Caco-2 (cell line): ENCODE measurements at regions of chr14 and their contacts with region 1.

Region 1: GRCh38 chr14:61537563-61538463 is 157.5 kb upstream of the HIF1A start:
- DNase-seq: peak; percentile 90 to 93
- H3K4me3 ChIP-seq: no peak overlapping the region
- H3K4me3 Mint-ChIP-seq: peak overlapping the region; percentile 63
- H3K27ac Mint-ChIP-seq: peak overlapping the region; percentile 99
- H3K4me1 ChIP-seq: peaks cover 45% of the 10 kb centered on the region
- H3K4me1 Mint-ChIP-seq: peaks cover 42% of the 10 kb centered on the region
- H3K27me3 ChIP-seq: no peaks in the 10 kb centered on the region
- H3K27me3 Mint-ChIP-seq: no peaks in the 10 kb centered on the region
- CTCF ChIP-seq: no peak

Region 2: GRCh38 chr14:61475316-61475715 is 62.5 kb before region 1 on chr14:
- CTCF ChIA-PET with region 1: no interaction called
- POLR2A ChIA-PET with region 1: no interaction called
- intact Hi-C with region 1: loop called (anchors 2 kb)
- DNase-seq: peak in 1 of 2 experiments; percentile 60
- H3K4me3 ChIP-seq: no peak overlapping the region
- H3K4me3 Mint-ChIP-seq: no peak overlapping the region
- H3K27ac Mint-ChIP-seq: no peak overlapping the region
- H3K4me1 ChIP-seq: no peaks in the 10 kb centered on the region
- H3K4me1 Mint-ChIP-seq: peaks cover 6% of the 10 kb centered on the region
- H3K27me3 ChIP-seq: no peaks in the 10 kb centered on the region
- H3K27me3 Mint-ChIP-seq: no peaks in the 10 kb centered on the region
- CTCF ChIP-seq: peak; percentile 61 to 77

Region 3: DNA sequence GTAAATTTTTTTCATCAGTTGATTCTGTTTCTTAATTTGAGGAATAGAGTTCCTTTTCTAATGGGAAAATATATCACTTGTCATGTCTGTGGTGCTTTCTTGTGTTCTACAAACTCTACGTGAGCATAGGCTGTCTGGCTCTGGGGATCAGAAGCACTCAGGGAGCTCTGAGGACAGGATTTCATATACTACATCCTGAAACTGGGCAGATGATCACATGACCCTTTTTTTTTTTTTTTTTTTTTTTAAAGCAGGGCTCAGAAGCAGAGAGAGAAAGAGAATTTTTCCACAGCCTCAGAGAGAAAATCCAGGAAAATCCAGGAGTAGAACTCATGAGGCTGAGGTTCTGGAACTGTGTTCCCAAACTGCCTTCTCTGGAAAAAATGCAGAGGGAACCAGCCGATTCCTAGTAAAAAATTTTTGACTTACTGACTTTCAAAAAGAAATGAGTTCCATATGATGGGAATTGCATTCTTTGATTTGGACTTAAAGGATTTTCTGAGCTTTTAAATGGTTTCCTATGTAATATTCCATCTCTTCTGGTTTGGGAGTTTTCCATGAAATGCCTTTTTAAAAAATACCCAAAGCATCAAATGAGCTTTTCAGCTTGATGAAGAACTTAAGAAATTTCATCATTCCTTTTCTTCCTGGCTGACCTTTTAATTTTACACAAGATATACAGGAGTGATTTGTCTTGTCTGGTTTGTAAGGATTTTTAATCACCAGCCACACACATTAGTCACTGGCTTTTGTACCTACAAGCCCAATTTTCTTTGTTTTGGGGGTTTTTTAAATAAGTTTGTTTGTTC is 25.6 kb before region 1 on chr14:
- CTCF ChIA-PET with region 1: no interaction called
- POLR2A ChIA-PET with region 1: no interaction called
- intact Hi-C with region 1: loop called (anchors 1 kb)
- DNase-seq: no peak
- H3K4me3 ChIP-seq: no peak overlapping the region
- H3K4me3 Mint-ChIP-seq: no peak overlapping the region
- H3K27ac Mint-ChIP-seq: no peak overlapping the region
- H3K4me1 ChIP-seq: peaks cover 15% of the 10 kb centered on the region
- H3K4me1 Mint-ChIP-seq: peaks cover 23% of the 10 kb centered on the region
- H3K27me3 ChIP-seq: no peaks in the 10 kb centered on the region
- H3K27me3 Mint-ChIP-seq: no peaks in the 10 kb centered on the region
- CTCF ChIP-seq: no peak

Region 4: DNA sequence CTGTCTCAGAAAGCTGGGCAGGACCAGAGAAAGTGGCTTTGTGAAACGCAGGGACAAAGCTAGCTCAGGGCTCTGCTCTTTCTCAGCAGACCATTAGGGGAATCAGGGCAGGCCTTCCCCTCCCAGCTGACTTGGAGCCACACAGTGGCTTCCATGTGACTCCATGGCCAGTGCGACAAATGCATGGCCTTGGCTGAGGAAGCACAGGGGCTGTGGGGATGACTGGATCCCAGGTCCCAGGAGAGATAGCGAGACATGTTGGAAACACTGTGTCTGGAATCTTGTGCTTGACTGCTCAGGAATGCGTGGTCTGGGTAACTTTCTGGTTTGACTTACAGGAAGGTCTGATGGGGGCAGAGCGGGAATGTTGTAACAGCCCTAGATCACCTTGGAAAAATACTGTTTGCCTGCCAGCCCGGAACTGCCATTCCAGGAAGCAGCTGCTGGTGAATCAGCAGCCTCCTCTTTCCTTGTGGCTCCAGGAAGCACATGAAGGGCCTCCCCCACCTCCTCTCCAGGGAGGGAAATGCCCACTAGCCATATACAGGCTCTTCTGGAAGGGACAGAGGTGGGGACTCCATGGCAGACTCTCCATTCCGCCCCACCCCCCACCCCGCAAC is 24.0 kb after region 1 on chr14:
- CTCF ChIA-PET with region 1: interaction called, 18 read pairs
- POLR2A ChIA-PET with region 1: interaction called, 30 read pairs
- intact Hi-C with region 1: loop called (anchors 1 kb)
- DNase-seq: peak; percentile 62 to 76
- H3K4me3 ChIP-seq: no peak overlapping the region
- H3K4me3 Mint-ChIP-seq: peak overlapping the region; percentile 28
- H3K27ac Mint-ChIP-seq: peak overlapping the region; percentile 94
- H3K4me1 ChIP-seq: peaks cover 56% of the 10 kb centered on the region
- H3K4me1 Mint-ChIP-seq: peaks cover 33% of the 10 kb centered on the region
- H3K27me3 ChIP-seq: no peaks in the 10 kb centered on the region
- H3K27me3 Mint-ChIP-seq: no peaks in the 10 kb centered on the region
- CTCF ChIP-seq: no peak

Region 5: DNA sequence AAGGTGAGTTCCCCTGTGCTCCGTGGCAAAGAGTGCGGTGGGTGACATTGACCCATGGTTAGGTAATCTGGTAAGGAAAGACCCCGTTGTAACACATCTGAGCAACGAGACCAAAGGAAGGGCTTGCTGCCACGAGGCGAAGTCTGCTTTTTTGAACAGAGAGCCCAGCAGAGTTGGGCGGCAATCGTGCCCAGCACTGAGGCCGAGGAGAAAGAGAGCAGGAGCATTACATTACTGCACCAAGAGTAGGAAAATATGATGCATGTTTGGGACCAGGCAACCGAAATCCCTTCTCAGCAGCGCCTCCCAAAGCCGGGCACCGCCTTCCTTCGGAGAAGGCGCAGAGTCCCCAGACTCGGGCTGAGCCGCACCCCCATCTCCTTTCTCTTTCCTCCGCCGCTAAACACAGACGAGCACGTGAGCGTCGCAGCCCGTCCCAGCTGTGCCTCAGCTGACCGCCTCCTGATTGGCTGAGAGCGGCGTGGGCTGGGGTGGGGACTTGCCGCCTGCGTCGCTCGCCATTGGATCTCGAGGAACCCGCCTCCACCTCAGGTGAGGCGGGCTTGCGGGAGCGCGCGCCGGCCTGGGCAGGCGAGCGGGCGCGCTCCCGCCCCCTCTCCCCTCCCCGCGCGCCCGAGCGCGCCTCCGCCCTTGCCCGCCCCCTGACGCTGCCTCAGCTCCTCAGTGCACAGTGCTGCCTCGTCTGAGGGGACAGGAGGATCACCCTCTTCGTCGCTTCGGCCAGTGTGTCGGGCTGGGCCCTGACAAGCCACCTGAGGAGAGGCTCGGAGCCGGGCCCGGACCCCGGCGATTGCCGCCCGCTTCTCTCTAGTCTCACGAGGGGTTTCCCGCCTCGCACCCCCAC is 157.2 kb after region 1 on chr14 and contains the start of gene HIF1A:
- CTCF ChIA-PET with region 1: no interaction called
- POLR2A ChIA-PET with region 1: interaction called, 7 read pairs
- intact Hi-C with region 1: loop called (anchors 1 kb)
- DNase-seq: peak; percentile 97 to 98
- H3K4me3 ChIP-seq: peak within 1 kb of the TSS; percentile 79
- H3K4me3 Mint-ChIP-seq: peak within 1 kb of the TSS; percentile 91
- H3K27ac Mint-ChIP-seq: peak within 1 kb of the TSS; percentile 94
- H3K4me1 ChIP-seq: peaks cover 17% of the 10 kb centered on the region
- H3K4me1 Mint-ChIP-seq: peaks cover 20% of the 10 kb centered on the region
- H3K27me3 ChIP-seq: no peaks in the 10 kb centered on the region
- H3K27me3 Mint-ChIP-seq: no peaks in the 10 kb centered on the region
- CTCF ChIP-seq: peak in 1 of 2 experiments; percentile 21
- total RNA-seq, gene HIF1A: 125 and 127 TPM in 2 replicates